B cell (primary cell): ENCODE measurements at regions of chr17 and their contacts with region 1.

Region 1: GRCh38 chr17:5191541-5192417 is at the start of gene ZNF594:
- DNase-seq: peak; percentile 97
- ATAC-seq: peak; percentile 99
- H3K4me3 ChIP-seq: peak within 1 kb of the TSS; percentile 53 to 99 (median 79)
- H3K4me3 Mint-ChIP-seq: peak within 1 kb of the TSS; percentile 95
- H3K27ac ChIP-seq: peak within 1 kb of the TSS; percentile 83 to 85
- H3K27ac Mint-ChIP-seq: peak within 1 kb of the TSS; percentile 94
- H3K4me1 ChIP-seq: peaks cover 16 to 25% of the 10 kb centered on the region in 2 donors
- H3K4me1 Mint-ChIP-seq: peaks cover 30% of the 10 kb centered on the region
- H3K27me3 ChIP-seq: no peaks in the 10 kb centered on the region
- H3K27me3 Mint-ChIP-seq: no peaks in the 10 kb centered on the region
- CTCF ChIP-seq: peak; percentile 75
- total RNA-seq, gene ZNF594: 36.2 and 38.9 TPM in 2 replicates

Region 2: DNA sequence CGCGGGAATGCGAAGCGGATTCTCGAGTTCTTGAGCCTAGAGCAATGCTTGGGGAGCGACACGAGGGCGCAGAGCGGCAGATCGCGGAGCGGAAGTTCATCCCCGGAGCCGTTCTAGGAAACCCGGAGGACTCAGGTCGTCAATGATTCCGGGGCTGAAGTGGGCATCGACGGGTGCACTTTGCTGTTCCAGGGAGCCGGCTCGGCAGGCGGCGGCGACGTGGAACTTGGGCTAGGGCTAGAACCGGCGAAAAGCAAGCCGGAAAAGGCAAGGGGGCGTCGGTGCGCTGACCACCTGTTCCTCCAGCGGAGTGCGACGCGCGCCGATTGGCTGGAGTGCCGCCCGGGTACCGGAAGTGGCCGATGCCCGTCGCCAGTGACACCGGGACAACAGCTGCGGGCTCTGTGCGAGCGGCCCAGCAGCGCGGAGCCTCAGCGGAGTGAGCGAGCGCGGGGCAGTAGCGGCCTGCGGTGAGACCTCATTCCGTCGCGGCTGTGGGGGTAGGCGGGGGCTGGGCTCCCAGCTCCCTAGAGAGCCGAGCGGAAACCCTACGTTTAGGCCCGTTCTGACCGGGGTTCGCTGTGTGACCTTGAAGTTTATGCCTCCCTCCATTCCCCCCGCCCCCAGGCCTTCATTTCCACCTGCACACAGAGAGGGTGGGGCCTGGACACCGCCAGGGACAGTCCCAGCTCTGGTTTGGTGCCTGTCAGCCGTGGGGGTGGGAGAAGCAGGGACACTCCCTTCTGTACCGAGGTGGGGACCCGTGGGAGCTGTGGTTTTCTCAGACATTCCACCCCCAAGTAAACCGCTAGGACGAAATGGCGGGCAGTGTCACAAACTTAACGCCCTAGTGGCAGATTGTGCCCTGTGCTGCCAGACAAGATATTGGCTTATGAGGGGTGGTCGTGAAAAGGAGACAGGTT is 113.4 kb before region 1 on chr17 and contains the start of gene ZFP3:
- CTCF ChIA-PET with region 1: interaction called, 8 read pairs
- POLR2A ChIA-PET with region 1: interaction called, 19 read pairs
- intact Hi-C with region 1: loop called (anchors 1 kb)
- DNase-seq: peak; percentile 92
- ATAC-seq: peak; percentile 83
- H3K4me3 ChIP-seq: peak within 1 kb of the TSS; percentile 68 to 78 (median 75)
- H3K4me3 Mint-ChIP-seq: peak within 1 kb of the TSS; percentile 81
- H3K27ac ChIP-seq: peak within 1 kb of the TSS; percentile 81 to 86
- H3K27ac Mint-ChIP-seq: peak within 1 kb of the TSS; percentile 95
- H3K4me1 ChIP-seq: peaks cover 8 to 21% of the 10 kb centered on the region in 2 donors
- H3K4me1 Mint-ChIP-seq: peaks cover 30% of the 10 kb centered on the region
- H3K27me3 ChIP-seq: no peaks in the 10 kb centered on the region
- H3K27me3 Mint-ChIP-seq: no peaks in the 10 kb centered on the region
- CTCF ChIP-seq: peak; percentile 64
- total RNA-seq, gene ZFP3: 15.8 and 16.2 TPM in 2 replicates

Region 3: GRCh38 chr17:5111402-5112204 is 80.2 kb before region 1 on chr17 and contains the start of gene ZNF232:
- CTCF ChIA-PET with region 1: interaction called, 10 read pairs
- POLR2A ChIA-PET with region 1: no interaction called
- intact Hi-C with region 1: loop called (anchors 1 kb)
- DNase-seq: peak; percentile 94
- ATAC-seq: peak; percentile 91
- H3K4me3 ChIP-seq: peak within 1 kb of the TSS; percentile 80 to 93 (median 88)
- H3K4me3 Mint-ChIP-seq: peak within 1 kb of the TSS; percentile 86
- H3K27ac ChIP-seq: peak within 1 kb of the TSS; percentile 62 to 74
- H3K27ac Mint-ChIP-seq: peak within 1 kb of the TSS; percentile 70
- H3K4me1 ChIP-seq: peaks cover 15 to 20% of the 10 kb centered on the region in 2 donors
- H3K4me1 Mint-ChIP-seq: peaks cover 25% of the 10 kb centered on the region
- H3K27me3 ChIP-seq: peaks cover 0 to 16% (median 8%) of the 10 kb centered on the region in 4 experiments
- H3K27me3 Mint-ChIP-seq: peaks cover 10% of the 10 kb centered on the region
- CTCF ChIP-seq: no peak
- total RNA-seq, gene ZNF232: 17.4 and 19.3 TPM in 2 replicates

Region 4: GRCh38 chr17:5164436-5164835 is 27.3 kb before region 1 on chr17:
- CTCF ChIA-PET with region 1: no interaction called
- POLR2A ChIA-PET with region 1: no interaction called
- intact Hi-C with region 1: no loop called
- DNase-seq: no peak
- ATAC-seq: no peak
- H3K4me3 ChIP-seq: no peak overlapping the region
- H3K4me3 Mint-ChIP-seq: no peak overlapping the region
- H3K27ac ChIP-seq: no peak overlapping the region
- H3K27ac Mint-ChIP-seq: no peak overlapping the region
- H3K4me1 ChIP-seq: peaks cover 18 to 23% of the 10 kb centered on the region in 2 donors
- H3K4me1 Mint-ChIP-seq: peaks cover 19% of the 10 kb centered on the region
- H3K27me3 ChIP-seq: no peaks in the 10 kb centered on the region
- H3K27me3 Mint-ChIP-seq: peaks cover under 1% of the 10 kb centered on the region
- CTCF ChIP-seq: no peak

Region 5: GRCh38 chr17:5237541-5238016 is 45.8 kb after region 1 on chr17:
- CTCF ChIA-PET with region 1: interaction called, 303 read pairs
- POLR2A ChIA-PET with region 1: interaction called, 15 read pairs
- intact Hi-C with region 1: loop called (anchors 1 kb)
- DNase-seq: peak; percentile 71
- ATAC-seq: peak; percentile 20
- H3K4me3 ChIP-seq: peak overlapping the region in 1 of 5 experiments; percentile 6
- H3K4me3 Mint-ChIP-seq: peak overlapping the region; percentile 65
- H3K27ac ChIP-seq: peak overlapping the region; percentile 72 to 80
- H3K27ac Mint-ChIP-seq: peak overlapping the region; percentile 90
- H3K4me1 ChIP-seq: peaks cover 71 to 92% of the 10 kb centered on the region in 2 donors
- H3K4me1 Mint-ChIP-seq: peaks cover 73% of the 10 kb centered on the region
- H3K27me3 ChIP-seq: no peaks in the 10 kb centered on the region
- H3K27me3 Mint-ChIP-seq: no peaks in the 10 kb centered on the region
- CTCF ChIP-seq: peak; percentile 55

Region 6: GRCh38 chr17:5486204-5487124 is 294.7 kb after region 1 on chr17 and contains the start of gene MIS12:
- CTCF ChIA-PET with region 1: no interaction called
- POLR2A ChIA-PET with region 1: no interaction called
- intact Hi-C with region 1: loop called (anchors 1 kb)
- DNase-seq: peak; percentile 98
- ATAC-seq: peak; percentile 90
- H3K4me3 ChIP-seq: peak within 1 kb of the TSS; percentile 90 to 99 (median 92)
- H3K4me3 Mint-ChIP-seq: peak within 1 kb of the TSS; percentile 94
- H3K27ac ChIP-seq: peak within 1 kb of the TSS; percentile 99 to 100
- H3K27ac Mint-ChIP-seq: peak within 1 kb of the TSS; percentile 97
- H3K4me1 ChIP-seq: peaks cover 17 to 26% of the 10 kb centered on the region in 2 donors
- H3K4me1 Mint-ChIP-seq: peaks cover 42% of the 10 kb centered on the region
- H3K27me3 ChIP-seq: no peaks in the 10 kb centered on the region
- H3K27me3 Mint-ChIP-seq: no peaks in the 10 kb centered on the region
- CTCF ChIP-seq: no peak
- total RNA-seq, gene MIS12: 33.2 and 41.1 TPM in 2 replicates